ENCODE measurements at regions of chr3 and their contacts with region 1.

Region 1: DNA sequence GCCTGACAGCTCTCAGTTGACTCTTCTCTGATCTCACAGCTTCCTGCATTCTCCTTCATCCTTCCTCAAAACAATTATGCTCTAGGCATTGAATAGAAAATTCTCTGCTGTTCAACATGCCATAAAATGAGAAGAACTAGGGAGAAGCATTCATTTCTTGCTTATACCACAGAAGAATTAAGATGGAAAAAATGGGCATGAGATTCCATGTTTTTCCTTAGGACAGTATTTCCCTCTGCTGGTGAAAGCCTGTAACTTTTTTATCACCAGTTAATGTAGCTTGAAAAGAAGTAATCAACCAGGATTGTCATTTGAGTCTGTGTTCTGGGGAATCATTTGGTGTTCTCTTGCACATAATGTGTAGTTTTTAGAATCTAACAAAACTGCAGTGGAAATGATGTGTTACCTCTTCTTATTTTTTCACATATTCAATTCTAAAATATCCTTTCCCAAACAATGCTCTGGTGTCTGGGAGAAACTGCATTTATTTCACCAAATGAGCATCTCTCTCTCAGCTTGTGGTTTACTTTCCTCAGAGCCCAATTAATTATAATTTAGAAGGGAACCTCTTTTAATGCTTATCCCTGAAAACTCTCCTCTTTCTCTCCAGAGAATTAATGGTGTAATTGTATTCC is 92.8 kb upstream of the DCBLD2 start:
- DNase-seq: no peak
- H3K4me3 ChIP-seq: no peak overlapping the region
- H3K27ac ChIP-seq: no peak overlapping the region
- H3K4me1 ChIP-seq: no peaks in the 10 kb centered on the region
- H3K27me3 ChIP-seq: no peaks in the 10 kb centered on the region
- CTCF ChIP-seq: peak; percentile 73 to 77 (median 76)
- EP300 ChIP-seq: no peak
- POLR2A ChIP-seq: no peak

Region 2: DNA sequence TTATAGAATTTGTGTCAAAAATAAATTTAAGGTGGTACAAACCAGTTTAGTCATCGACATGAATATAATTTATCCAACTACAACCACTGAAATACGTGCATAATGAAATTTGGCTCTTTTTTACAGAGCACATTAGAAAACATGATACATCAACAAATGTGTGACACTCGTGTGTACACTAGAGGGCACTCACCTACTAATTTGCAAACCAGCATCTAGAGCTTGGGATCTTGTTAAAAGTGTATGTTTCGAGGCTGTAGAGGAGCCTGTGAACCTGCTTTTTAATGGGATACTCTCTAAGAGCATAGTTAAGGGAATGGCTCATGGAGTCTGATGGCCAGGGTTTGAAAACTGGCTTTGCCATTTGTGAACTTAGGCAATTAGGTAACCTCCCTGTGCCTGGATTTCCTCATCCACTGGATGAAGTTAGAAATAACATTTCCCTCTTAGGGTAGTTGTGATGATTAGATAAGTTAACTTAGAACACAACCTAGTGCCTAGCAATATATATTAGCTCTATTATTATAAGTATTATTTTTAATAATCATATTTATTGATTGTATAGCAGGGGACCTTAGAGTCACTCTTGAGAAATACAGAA is 392.1 kb before region 1 on chr3:
- intact Hi-C with region 1: loop called in 1 of 4 experiments (anchors 10 kb)
- DNase-seq: peak in 1 of 5 donors; percentile 22
- H3K4me3 ChIP-seq: no peak overlapping the region
- H3K27ac ChIP-seq: no peak overlapping the region
- H3K4me1 ChIP-seq: no peaks in the 10 kb centered on the region
- H3K27me3 ChIP-seq: no peaks in the 10 kb centered on the region
- CTCF ChIP-seq: peak in 2 of 3 donors; percentile 28 to 51
- EP300 ChIP-seq: no peak
- POLR2A ChIP-seq: no peak

Region 3: DNA sequence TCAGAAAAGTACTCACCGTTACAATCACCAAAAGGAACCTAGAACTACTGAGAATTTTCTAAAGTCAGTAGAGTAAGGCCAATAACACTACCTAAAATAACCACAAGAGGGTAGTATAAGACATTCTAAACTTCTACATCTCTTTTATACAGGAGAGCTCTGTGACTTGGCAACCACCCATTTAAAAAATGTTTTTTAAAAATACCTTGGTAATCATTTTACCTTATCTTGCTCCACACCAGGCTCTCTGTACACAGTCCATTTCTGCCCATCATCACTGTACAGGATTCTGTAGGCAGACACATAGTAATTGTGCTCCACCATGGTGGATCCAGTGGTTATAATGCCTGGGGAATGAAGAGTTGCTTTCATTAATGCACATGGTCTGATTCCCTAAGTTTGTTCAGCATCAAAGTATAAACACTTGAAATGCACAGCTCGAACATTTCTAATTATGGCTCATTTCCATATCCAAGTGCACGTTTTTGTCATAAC is 176.7 kb before region 1 on chr3:
- intact Hi-C with region 1: loop called (anchors 5 kb)
- DNase-seq: no peak
- H3K4me3 ChIP-seq: no peak overlapping the region
- H3K27ac ChIP-seq: no peak overlapping the region
- H3K4me1 ChIP-seq: no peaks in the 10 kb centered on the region
- H3K27me3 ChIP-seq: no peaks in the 10 kb centered on the region
- CTCF ChIP-seq: peak; percentile 42 to 64 (median 62)
- EP300 ChIP-seq: no peak
- POLR2A ChIP-seq: no peak